Activated CD4-positive, alpha-beta memory T cell treated with anti-CD3 and anti-CD28 coated beads, Interleukin-2, amount 10 ng/mL, durations not matched to agents 7 days and 5 days (primary cell): ENCODE measurements at regions of chr17 and their contacts with region 1.

Region 1: GRCh38 chr17:35082073-35082657 is 18.7 kb upstream of the RFFL start:
- DNase-seq: no peak
- H3K4me3 Mint-ChIP-seq: peak overlapping the region; percentile 34
- H3K27ac Mint-ChIP-seq: peak overlapping the region; percentile 87
- H3K4me1 Mint-ChIP-seq: peaks cover 85% of the 10 kb centered on the region
- H3K27me3 Mint-ChIP-seq: no peaks in the 10 kb centered on the region

Region 2: DNA sequence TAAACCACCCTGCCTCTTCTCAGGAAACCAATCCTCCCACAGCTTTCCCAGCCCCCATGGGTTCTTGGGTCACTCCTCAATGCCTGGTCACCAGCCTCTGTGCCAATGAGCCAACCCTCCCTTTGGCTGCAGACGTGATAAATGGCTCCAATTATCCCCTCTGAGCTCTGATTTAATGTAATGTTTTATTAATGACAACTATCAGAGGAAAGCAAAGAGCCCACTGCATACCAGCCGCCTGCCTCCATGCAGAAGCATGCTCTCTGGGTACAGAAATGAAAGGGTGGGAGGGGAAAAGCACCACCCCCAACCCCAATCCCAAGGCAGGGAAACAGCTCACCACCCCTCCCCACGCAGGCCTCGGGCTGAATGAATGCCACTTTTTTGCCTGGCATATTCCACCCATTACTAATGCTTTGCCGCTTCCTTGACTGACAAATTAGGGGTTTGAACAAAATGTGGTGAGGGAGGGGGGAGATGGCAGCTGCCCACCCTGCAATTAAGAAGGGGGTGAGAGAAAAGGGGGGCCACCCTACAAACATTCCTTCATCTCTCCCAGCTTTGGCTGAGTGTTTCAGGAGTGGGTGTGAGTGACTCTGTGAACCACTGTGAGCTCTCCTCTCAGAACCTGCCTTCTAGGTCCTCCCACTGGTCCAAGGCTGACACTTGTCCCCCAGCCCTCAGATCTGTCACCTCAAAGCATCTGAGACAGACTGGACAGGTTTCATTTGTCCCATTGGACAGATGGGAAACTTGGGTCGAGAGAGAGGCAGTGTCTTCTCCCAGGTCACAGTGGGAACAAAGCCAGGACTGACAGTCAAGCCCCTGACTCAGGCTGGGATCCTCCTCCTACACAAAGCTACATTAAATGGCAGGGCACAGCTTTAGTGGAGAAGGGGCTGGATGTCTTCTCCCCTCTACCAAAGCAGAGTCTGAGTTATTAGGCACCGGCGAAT is 341.3 kb before region 1 on chr17:
- CTCF ChIA-PET with region 1: no interaction called
- POLR2A ChIA-PET with region 1: no interaction called
- DNase-seq: no peak
- H3K4me3 Mint-ChIP-seq: no peak overlapping the region
- H3K27ac Mint-ChIP-seq: no peak overlapping the region
- H3K4me1 Mint-ChIP-seq: no peaks in the 10 kb centered on the region
- H3K27me3 Mint-ChIP-seq: peaks cover 13% of the 10 kb centered on the region

Region 3: GRCh38 chr17:35011671-35012210 is 70.4 kb before region 1 on chr17:
- CTCF ChIA-PET with region 1: no interaction called
- POLR2A ChIA-PET with region 1: no interaction called
- DNase-seq: no peak
- H3K4me3 Mint-ChIP-seq: no peak overlapping the region
- H3K27ac Mint-ChIP-seq: no peak overlapping the region
- H3K4me1 Mint-ChIP-seq: no peaks in the 10 kb centered on the region
- H3K27me3 Mint-ChIP-seq: no peaks in the 10 kb centered on the region

Region 4: DNA sequence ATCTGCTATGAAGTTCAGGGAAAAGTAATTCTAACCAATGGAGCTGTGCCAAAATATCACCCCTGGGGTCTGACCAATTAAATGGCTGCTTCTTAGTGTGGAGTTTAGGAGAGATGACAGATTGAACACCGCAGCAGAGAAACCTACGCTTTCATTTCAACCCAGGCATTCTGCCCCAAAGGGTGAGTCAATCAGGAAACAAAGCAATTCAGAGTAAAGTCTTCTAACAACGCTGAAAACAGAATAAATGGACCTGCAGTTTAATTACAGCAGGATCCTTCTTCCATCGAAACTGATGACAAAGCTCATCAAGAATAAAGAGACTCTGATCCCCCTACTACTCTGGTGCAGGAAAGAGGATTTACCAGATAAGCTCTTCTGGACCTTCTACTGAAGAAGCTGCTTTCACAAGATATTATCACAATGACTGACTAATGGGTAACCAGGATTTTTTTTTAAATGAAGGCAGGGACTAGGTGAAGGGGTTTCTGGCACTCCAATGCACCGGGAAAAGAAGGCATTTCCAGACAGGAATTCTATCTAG is 35.4 kb before region 1 on chr17:
- CTCF ChIA-PET with region 1: interaction called, 7 read pairs
- POLR2A ChIA-PET with region 1: interaction called, 40 read pairs
- DNase-seq: peak; percentile 77
- H3K4me3 Mint-ChIP-seq: peak overlapping the region; percentile 70
- H3K27ac Mint-ChIP-seq: peak overlapping the region; percentile 93
- H3K4me1 Mint-ChIP-seq: peaks cover 55% of the 10 kb centered on the region
- H3K27me3 Mint-ChIP-seq: no peaks in the 10 kb centered on the region

Region 5: GRCh38 chr17:35170968-35171771 is 89.0 kb after region 1 on chr17:
- CTCF ChIA-PET with region 1: no interaction called
- POLR2A ChIA-PET with region 1: no interaction called
- DNase-seq: no peak
- H3K4me3 Mint-ChIP-seq: no peak overlapping the region
- H3K27ac Mint-ChIP-seq: peak overlapping the region; percentile 26
- H3K4me1 Mint-ChIP-seq: peaks cover 23% of the 10 kb centered on the region
- H3K27me3 Mint-ChIP-seq: no peaks in the 10 kb centered on the region

Region 6: DNA sequence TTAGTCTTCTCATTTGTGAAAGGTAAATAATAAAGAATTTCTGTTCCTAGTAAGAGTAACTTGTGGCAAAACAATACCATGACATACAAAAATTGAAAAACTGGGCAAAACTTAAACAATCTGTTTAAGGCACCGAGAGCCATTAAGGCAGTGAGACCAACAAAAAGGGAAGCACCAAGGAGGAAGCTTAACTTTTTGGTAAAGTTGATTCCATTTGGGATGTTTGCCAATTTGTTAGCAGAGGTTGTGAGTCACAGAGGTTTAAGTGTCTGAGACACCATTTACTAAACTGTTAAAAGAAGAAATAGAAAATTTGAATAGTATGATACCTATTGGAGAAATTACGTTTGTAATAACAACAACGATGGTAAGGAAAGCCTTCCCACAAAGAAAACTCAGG is 107.1 kb after region 1 on chr17:
- CTCF ChIA-PET with region 1: no interaction called
- POLR2A ChIA-PET with region 1: no interaction called
- DNase-seq: no peak
- H3K4me3 Mint-ChIP-seq: no peak overlapping the region
- H3K27ac Mint-ChIP-seq: no peak overlapping the region
- H3K4me1 Mint-ChIP-seq: peaks cover 26% of the 10 kb centered on the region
- H3K27me3 Mint-ChIP-seq: peaks cover 7% of the 10 kb centered on the region